CD4-positive, alpha-beta T cell (primary cell): ENCODE measurements at regions of chr14 and their contacts with region 1.

Region 1: DNA sequence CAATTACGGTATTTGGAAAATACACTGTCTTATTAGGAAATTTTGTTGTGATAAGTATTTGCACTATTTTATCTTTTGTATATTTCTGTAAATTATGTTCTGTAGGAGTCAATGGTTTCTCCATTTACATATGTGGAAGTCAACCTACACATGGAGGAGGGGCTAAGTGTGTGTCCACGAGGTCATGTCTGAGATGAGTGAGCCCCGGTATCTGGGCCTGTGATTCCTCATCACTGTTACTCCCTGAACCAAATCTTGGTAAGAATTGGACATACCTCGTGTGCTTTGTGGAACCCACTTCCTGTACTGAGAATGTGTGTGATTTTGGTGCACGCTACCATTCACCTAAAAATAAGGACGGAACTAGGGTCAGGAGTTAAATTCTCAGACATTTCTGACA is 1105.5 kb downstream of the TMEM121 start:
- DNase-seq: no peak
- ATAC-seq: no peak
- H3K4me3 ChIP-seq: no peak overlapping the region
- H3K4me3 Mint-ChIP-seq: no peak overlapping the region
- H3K27ac ChIP-seq: no peak overlapping the region
- H3K27ac Mint-ChIP-seq: no peak overlapping the region
- H3K4me1 ChIP-seq: peaks cover 5% of the 10 kb centered on the region
- H3K4me1 Mint-ChIP-seq: peaks cover 7% of the 10 kb centered on the region
- H3K27me3 ChIP-seq: peaks cover 6 to 7% of the 10 kb centered on the region in 2 experiments
- H3K27me3 Mint-ChIP-seq: peaks cover 10% of the 10 kb centered on the region
- CTCF ChIP-seq: no peak

Region 2: DNA sequence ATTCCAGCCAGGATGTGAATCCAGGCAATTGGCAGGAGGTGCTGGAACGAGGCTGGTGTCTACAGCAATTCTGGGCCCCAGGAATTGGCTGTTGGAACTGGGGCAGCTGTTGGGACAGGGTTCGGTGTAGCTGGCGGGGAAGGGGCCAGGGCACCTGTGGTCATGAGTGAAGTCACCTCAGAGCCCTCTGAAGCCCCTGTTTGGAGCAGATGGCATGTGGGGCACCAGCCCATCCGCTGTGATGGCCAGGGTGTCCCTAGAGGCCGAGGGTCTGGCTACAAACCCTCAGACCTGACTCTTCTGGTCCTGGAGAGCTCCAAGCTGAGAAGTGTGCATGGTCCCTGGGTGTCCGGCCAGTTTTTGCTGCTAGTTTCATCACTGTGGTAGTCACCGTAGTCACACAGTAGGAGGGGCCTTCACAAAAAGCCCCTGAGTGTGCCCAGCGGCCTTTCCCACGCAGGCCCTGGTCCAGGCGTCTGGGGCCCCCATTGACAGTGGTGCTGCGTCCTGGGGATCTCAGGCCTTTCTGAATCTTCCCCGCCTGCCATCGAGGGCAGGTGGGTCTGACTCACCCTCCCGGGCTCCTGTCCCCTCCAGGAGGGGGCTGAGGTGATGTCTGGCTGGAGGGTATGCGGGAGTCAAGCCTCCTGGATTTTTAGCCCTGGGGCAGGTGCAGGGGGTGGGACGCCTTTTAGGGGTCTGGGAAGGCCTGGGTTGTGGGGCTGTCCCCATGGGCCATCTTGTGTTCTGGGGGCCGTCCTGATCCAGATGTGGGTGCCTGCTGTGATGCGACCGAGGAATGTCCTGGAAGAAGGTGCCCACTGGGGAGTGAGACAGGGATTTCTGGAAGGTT is 737.5 kb before region 1 on chr14:
- CTCF ChIA-PET with region 1: no interaction called
- POLR2A ChIA-PET with region 1: no interaction called
- intact Hi-C with region 1: no loop called
- DNase-seq: peak in 1 of 14 experiments; percentile 16
- ATAC-seq: no peak
- H3K4me3 ChIP-seq: no peak overlapping the region
- H3K4me3 Mint-ChIP-seq: no peak overlapping the region
- H3K27ac ChIP-seq: no peak overlapping the region
- H3K27ac Mint-ChIP-seq: no peak overlapping the region
- H3K4me1 ChIP-seq: no peaks in the 10 kb centered on the region
- H3K4me1 Mint-ChIP-seq: no peaks in the 10 kb centered on the region
- H3K27me3 ChIP-seq: peaks cover 2 to 6% of the 10 kb centered on the region in 2 experiments
- H3K27me3 Mint-ChIP-seq: peaks cover 30% of the 10 kb centered on the region
- CTCF ChIP-seq: no peak

Region 3: DNA sequence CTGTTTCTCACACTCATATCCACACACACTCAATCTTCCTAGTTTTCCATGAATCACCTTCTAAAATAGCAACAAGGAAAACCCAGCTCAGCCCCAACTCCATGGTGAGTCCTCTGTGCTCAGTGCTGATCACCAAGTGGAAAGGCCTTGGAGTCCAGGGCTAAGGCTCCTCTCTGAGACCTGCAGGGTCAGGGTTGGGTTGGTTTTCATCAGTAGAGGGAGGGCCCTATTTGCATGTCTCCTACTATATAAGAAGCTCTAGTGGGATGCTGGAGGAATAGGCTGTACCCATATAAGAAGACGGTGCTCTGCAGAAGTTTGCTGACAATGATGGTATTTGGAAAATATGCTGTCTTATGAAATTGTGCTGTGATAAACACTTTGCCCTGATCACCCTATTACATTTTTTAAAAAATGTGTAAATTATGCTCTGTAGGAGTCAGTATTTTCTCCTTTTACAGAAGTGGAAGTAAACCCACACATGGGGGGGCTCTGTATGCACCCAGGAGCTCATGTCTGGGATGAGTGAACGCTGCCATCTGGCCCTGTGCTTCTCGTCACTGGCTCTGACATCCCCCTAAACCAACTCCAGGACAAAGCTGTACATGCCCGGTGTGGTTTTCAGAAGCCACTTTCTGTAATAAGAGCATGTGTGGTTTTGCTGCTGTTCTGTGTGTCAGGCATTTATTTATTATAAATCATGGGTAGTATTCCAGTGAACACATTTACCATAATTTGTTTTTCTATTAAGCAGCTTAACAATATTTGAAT is 569.2 kb before region 1 on chr14:
- CTCF ChIA-PET with region 1: no interaction called
- POLR2A ChIA-PET with region 1: no interaction called
- intact Hi-C with region 1: no loop called
- DNase-seq: peak in 1 of 14 experiments; percentile 13
- ATAC-seq: no peak
- H3K4me3 ChIP-seq: no peak overlapping the region
- H3K4me3 Mint-ChIP-seq: no peak overlapping the region
- H3K27ac ChIP-seq: no peak overlapping the region
- H3K27ac Mint-ChIP-seq: no peak overlapping the region
- H3K4me1 ChIP-seq: peaks cover 17% of the 10 kb centered on the region
- H3K4me1 Mint-ChIP-seq: peaks cover 17% of the 10 kb centered on the region
- H3K27me3 ChIP-seq: peaks cover 3 to 4% of the 10 kb centered on the region in 2 experiments
- H3K27me3 Mint-ChIP-seq: peaks cover 12% of the 10 kb centered on the region
- CTCF ChIP-seq: no peak

Region 4: GRCh38 chr14:106642090-106642489 is 10.2 kb after region 1 on chr14:
- CTCF ChIA-PET with region 1: interaction called, 3 read pairs
- POLR2A ChIA-PET with region 1: no interaction called
- intact Hi-C with region 1: loop called in 1 of 2 experiments (anchors 1 kb)
- DNase-seq: no peak
- ATAC-seq: no peak
- H3K4me3 ChIP-seq: no peak overlapping the region
- H3K4me3 Mint-ChIP-seq: no peak overlapping the region
- H3K27ac ChIP-seq: no peak overlapping the region
- H3K27ac Mint-ChIP-seq: no peak overlapping the region
- H3K4me1 ChIP-seq: no peaks in the 10 kb centered on the region
- H3K4me1 Mint-ChIP-seq: no peaks in the 10 kb centered on the region
- H3K27me3 ChIP-seq: no peaks in the 10 kb centered on the region
- H3K27me3 Mint-ChIP-seq: peaks cover 8% of the 10 kb centered on the region
- CTCF ChIP-seq: no peak

Region 5: GRCh38 chr14:106665814-106666213 is 33.9 kb after region 1 on chr14:
- CTCF ChIA-PET with region 1: no interaction called
- POLR2A ChIA-PET with region 1: no interaction called
- intact Hi-C with region 1: no loop called
- DNase-seq: peak in 8 of 14 experiments; percentile 4 to 41 (median 19)
- ATAC-seq: no peak
- H3K4me3 ChIP-seq: no peak overlapping the region
- H3K4me3 Mint-ChIP-seq: no peak overlapping the region
- H3K27ac ChIP-seq: no peak overlapping the region
- H3K27ac Mint-ChIP-seq: no peak overlapping the region
- H3K4me1 ChIP-seq: no peaks in the 10 kb centered on the region
- H3K4me1 Mint-ChIP-seq: peaks cover 30% of the 10 kb centered on the region
- H3K27me3 ChIP-seq: no peaks in the 10 kb centered on the region
- H3K27me3 Mint-ChIP-seq: peaks cover 12% of the 10 kb centered on the region
- CTCF ChIP-seq: peak; percentile 47